Astrocyte of the cerebellum (primary cell): ENCODE measurements at regions of chr16 and their contacts with region 1.

Region 1: GRCh38 chr16:1474796-1475551 is at the start of gene CLCN7:
- DNase-seq: peak; percentile 56
- H3K4me3 ChIP-seq: peak within 1 kb of the TSS; percentile 70
- CTCF ChIP-seq: no peak

Region 2: DNA sequence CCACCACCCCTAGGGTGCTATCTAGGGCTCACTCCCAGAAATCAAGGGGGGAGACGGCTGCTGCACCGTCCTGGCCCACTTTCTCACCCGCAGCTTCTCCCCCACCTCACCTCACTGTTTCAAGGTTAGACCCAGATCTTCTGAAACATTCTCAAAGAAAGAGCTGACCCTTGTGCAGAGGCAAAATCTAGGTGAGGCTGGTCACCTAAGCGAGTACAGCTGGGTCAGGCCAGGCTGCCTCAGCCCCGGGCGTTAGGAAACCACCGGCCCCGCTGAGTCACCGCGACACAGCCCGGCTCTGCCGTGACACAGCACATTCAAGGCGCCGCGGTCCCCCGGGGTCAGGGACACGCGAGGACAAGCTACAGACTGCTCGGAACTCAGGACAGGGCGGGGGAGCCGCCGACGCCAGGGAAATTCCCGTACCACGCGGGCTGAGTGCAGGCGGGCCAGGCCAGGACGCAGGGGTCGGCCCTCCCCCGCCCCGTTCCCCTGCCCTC is 96.1 kb before region 1 on chr16:
- in situ Hi-C with region 1: loop called (anchors 25 kb)
- DNase-seq: no peak
- H3K4me3 ChIP-seq: peak overlapping the region; percentile 47
- CTCF ChIP-seq: no peak

Region 3: GRCh38 chr16:1527836-1528811 is 53.1 kb after region 1 on chr16:
- in situ Hi-C with region 1: no loop called
- DNase-seq: no peak
- H3K4me3 ChIP-seq: no peak overlapping the region
- CTCF ChIP-seq: no peak

Region 4: GRCh38 chr16:1543085-1543896 is 68.3 kb after region 1 on chr16:
- in situ Hi-C with region 1: no loop called
- DNase-seq: no peak
- H3K4me3 ChIP-seq: no peak overlapping the region
- CTCF ChIP-seq: no peak